Motor neuron (in vitro differentiated cells): ENCODE measurements at regions of chr12 and their contacts with region 1.

Region 1: DNA sequence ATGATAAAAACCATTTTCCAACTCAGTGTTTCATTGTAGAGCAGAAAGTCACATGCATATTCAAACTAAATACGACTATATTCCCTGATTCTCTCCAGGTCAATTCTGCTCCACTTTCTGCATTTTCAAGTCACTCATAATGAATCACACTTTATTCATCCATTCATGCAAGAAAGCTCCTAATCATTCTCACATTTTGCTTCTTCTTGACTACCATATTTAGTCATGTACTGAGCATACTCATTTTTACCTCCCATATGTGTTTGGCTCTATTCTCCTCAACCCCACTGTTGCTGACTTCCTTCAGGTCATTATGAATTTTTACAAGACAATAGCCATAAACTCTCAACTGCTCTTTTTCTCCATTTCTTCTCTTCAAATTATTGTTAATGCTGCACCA is 43.4 kb upstream of the PIK3C2G start:
- ATAC-seq: peak in 3 of 8 experiments; percentile 53 to 99 (median 97)
- H3K4me3 ChIP-seq: no peak overlapping the region
- H3K27ac ChIP-seq: no peak overlapping the region
- H3K4me1 ChIP-seq: peaks cover 0 to 25% of the 10 kb centered on the region in 2 donors

Region 2: DNA sequence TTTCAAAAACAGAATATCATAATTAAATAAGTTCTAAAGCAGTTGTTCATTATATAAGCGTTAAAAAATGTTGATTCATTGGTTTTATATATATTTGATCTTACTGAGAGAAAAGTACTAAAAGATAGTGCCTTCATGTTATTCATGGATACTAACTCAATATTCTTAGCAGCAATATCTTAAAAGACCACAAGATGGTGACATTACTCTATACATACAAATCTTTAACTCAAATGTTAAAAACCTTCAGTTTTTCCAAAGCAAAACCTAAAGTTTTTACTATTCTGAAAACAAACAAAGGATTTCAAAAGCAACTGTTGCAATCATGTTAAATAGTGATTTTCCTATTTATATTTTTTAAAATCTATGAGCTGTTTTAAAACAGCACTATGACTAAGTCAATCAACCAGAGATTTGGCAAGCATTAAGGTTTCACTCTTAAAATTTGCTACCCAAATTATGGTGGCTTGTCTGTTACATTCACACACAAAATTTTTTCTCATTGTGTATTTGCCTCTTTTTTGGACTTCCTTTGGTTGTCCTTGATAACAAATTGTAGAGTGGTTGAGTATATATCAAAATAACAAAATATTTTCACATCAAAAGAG is 77.9 kb before region 1 on chr12:
- in situ Hi-C with region 1: loop called in 1 of 9 experiments (anchors 10 kb)
- ATAC-seq: no peak
- H3K4me3 ChIP-seq: no peak overlapping the region
- H3K27ac ChIP-seq: no peak overlapping the region
- H3K4me1 ChIP-seq: peaks cover 0 to 2% of the 10 kb centered on the region in 2 donors

Region 3: GRCh38 chr12:18313306-18313705 is 95.3 kb after region 1 on chr12:
- in situ Hi-C with region 1: no loop called
- ATAC-seq: no peak
- H3K4me3 ChIP-seq: no peak overlapping the region
- H3K27ac ChIP-seq: no peak overlapping the region
- H3K4me1 ChIP-seq: no peaks in the 10 kb centered on the region